ENCODE measurements at regions of chr19 and their contacts with region 1.

Region 1: GRCh38 chr19:38849860-38850435 is at the start of gene HNRNPL:
- DNase-seq: peak; percentile 99
- ATAC-seq: peak; percentile 71
- H3K4me3 Mint-ChIP-seq: peak within 1 kb of the TSS; percentile 97
- H3K27ac Mint-ChIP-seq: peak within 1 kb of the TSS; percentile 99
- H3K4me1 Mint-ChIP-seq: peaks cover 42% of the 10 kb centered on the region
- H3K27me3 Mint-ChIP-seq: no peaks in the 10 kb centered on the region
- total RNA-seq, gene HNRNPL: 714 to 722 TPM

Region 2: DNA sequence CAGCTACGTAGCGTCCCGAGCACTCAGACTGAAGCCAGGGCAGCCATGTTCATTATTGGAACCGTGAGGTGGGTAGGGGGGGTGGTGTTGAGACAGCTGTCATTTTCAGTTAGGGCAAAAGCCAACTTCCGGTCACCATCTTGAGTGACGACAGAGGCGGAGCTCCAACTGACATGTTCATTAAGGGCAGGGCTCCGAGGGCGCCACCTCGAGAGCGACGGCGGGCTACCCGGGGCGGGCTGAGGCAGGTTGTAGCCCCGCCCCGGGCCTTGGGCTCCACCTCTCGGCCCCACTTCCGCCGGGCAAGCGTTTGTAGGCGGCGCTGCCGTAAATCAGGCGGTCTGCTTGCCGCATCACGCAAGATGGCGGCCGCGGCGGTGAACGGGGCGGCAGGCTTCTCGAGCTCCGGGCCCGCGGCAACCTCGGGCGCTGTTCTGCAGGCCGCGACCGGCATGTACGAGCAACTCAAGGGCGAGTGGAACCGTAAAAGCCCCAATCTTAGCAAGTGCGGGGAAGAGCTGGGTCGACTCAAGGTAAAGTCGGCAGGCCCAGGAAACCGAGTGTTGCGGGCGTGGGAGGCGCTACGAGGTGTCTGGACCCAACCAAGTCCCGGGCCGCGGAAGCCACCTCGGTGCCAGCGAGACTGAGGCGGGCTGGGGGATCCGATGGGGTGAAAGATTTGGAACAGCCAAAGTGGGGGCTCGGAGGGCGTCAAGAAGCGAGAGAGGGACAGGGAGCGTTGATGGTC is 475.3 kb before region 1 on chr19 and contains the start of gene PSMD8:
- CTCF ChIA-PET with region 1: no interaction called
- POLR2A ChIA-PET with region 1: no interaction called
- intact Hi-C with region 1: loop called in 1 of 2 experiments (anchors 1 kb)
- DNase-seq: peak; percentile 99
- ATAC-seq: peak; percentile 99
- H3K4me3 Mint-ChIP-seq: peak within 1 kb of the TSS; percentile 97
- H3K27ac Mint-ChIP-seq: peak within 1 kb of the TSS; percentile 98
- H3K4me1 Mint-ChIP-seq: peaks cover 26% of the 10 kb centered on the region
- H3K27me3 Mint-ChIP-seq: peaks cover 5% of the 10 kb centered on the region
- total RNA-seq, gene PSMD8: 219 to 275 TPM

Region 3: GRCh38 chr19:38618590-38619360 is 231.2 kb before region 1 on chr19 and contains the start of gene EIF3K:
- CTCF ChIA-PET with region 1: interaction called, 6 read pairs
- POLR2A ChIA-PET with region 1: interaction called, 5 read pairs
- intact Hi-C with region 1: loop called (anchors 1 kb)
- DNase-seq: peak; percentile 99
- ATAC-seq: peak; percentile 74
- H3K4me3 Mint-ChIP-seq: peak within 1 kb of the TSS; percentile 100
- H3K27ac Mint-ChIP-seq: peak within 1 kb of the TSS; percentile 99
- H3K4me1 Mint-ChIP-seq: peaks cover 44% of the 10 kb centered on the region
- H3K27me3 Mint-ChIP-seq: no peaks in the 10 kb centered on the region
- total RNA-seq, gene EIF3K: 269 to 297 TPM

Region 4: DNA sequence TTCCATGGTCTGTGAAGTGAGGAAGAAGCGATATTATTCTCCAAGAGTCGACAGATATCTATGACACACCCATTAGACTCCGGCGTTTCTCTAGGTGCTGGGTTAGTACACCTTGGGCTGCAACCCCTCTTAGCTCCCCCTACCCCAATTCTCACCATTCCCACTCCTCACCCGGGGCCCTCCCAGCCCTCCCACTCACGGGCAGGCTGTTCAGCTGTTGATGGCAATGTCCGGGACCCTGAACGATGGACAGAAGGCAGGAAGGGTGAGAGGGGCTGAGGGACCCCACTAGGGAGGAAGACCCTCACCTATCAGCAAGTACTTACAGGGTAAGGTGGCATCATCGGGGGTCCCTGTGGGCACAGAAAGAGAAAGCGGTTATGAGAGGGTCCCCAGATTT is 46.4 kb before region 1 on chr19:
- CTCF ChIA-PET with region 1: no interaction called
- POLR2A ChIA-PET with region 1: no interaction called
- intact Hi-C with region 1: no loop called
- DNase-seq: no peak
- ATAC-seq: no peak
- H3K4me3 Mint-ChIP-seq: no peak overlapping the region
- H3K27ac Mint-ChIP-seq: no peak overlapping the region
- H3K4me1 Mint-ChIP-seq: peaks cover 8% of the 10 kb centered on the region
- H3K27me3 Mint-ChIP-seq: no peaks in the 10 kb centered on the region

Region 5: GRCh38 chr19:38838573-38839269 is 11.2 kb before region 1 on chr19:
- CTCF ChIA-PET with region 1: interaction called, 4 read pairs
- POLR2A ChIA-PET with region 1: interaction called, 11 read pairs
- intact Hi-C with region 1: no loop called
- DNase-seq: peak; percentile 89
- ATAC-seq: peak; percentile 83
- H3K4me3 Mint-ChIP-seq: peak overlapping the region; percentile 9
- H3K27ac Mint-ChIP-seq: peak overlapping the region; percentile 86
- H3K4me1 Mint-ChIP-seq: peaks cover 58% of the 10 kb centered on the region
- H3K27me3 Mint-ChIP-seq: no peaks in the 10 kb centered on the region

Region 6: GRCh38 chr19:38899447-38900219 is 49.7 kb after region 1 on chr19 and contains the starts of genes NFKBIB and SIRT2:
- CTCF ChIA-PET with region 1: no interaction called
- POLR2A ChIA-PET with region 1: interaction called, 6 read pairs
- intact Hi-C with region 1: loop called (anchors 1 kb)
- DNase-seq: peak; percentile 100
- ATAC-seq: peak; percentile 93
- H3K4me3 Mint-ChIP-seq: peak within 1 kb of the TSS; percentile 88
- H3K27ac Mint-ChIP-seq: peak within 1 kb of the TSS; percentile 91
- H3K4me1 Mint-ChIP-seq: peaks cover 40% of the 10 kb centered on the region
- H3K27me3 Mint-ChIP-seq: no peaks in the 10 kb centered on the region
- total RNA-seq, gene NFKBIB: 49.4 to 52.5 TPM
- total RNA-seq, gene SIRT2: 17.8 to 23.1 TPM

Region 7: DNA sequence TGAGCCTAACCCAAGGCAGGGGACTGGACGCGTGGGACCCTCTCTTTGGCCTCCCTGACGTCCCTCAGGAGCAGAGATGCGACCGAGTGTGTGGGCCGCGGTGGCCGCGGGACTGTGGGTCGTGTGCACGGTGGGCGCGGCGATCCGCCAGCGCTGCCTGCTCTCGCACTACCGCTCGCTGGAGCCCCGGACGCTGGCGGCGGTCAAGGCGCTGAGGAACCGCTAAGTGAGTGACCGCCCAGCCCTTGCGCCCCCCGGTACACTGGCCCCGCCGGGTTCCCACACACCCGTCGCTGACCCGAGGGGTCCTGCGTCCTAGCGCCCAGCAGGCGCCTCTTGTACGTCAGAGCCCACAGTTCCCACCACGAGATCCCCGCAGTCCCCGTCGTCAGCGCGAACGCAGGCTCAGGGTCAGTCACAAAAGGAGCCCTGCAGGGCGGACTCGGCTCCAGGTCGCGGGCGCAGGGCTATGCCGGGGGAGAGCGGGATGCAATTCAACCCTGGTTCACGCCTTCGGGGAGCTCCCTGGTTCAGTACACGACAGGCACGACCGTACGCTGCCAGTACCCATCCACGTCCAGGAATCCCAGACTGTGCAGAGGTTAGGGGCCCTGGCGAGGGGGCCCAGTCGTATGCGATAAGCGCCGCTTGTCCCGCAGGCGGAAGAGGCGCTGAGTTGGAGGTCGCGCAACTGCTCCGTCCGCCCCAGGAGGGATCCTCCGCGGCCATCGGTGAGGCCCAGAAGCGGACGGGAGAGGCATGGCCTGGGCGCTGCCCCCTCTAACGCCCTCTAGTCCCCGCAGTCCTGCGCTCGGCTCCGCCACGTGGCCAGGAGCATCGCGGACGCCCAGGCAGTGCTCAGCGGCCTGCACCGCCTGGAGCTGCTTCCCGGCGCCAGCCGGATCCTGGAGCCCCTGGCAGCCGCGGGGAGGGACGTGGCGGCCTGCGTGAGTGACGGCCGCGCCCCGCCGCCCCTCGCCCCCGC is 414.6 kb after region 1 on chr19:
- CTCF ChIA-PET with region 1: no interaction called
- POLR2A ChIA-PET with region 1: no interaction called
- intact Hi-C with region 1: no loop called
- DNase-seq: peak; percentile 8
- ATAC-seq: peak; percentile 42
- H3K4me3 Mint-ChIP-seq: no peak overlapping the region
- H3K27ac Mint-ChIP-seq: no peak overlapping the region
- H3K4me1 Mint-ChIP-seq: peaks cover 2% of the 10 kb centered on the region
- H3K27me3 Mint-ChIP-seq: peaks cover 36% of the 10 kb centered on the region

Region 8: GRCh38 chr19:39412100-39412866 is 562.3 kb after region 1 on chr19 and contains the start of gene PLEKHG2:
- CTCF ChIA-PET with region 1: no interaction called
- POLR2A ChIA-PET with region 1: no interaction called
- intact Hi-C with region 1: loop called in 1 of 2 experiments (anchors 1 kb)
- DNase-seq: peak; percentile 98
- ATAC-seq: peak; percentile 73
- H3K4me3 Mint-ChIP-seq: peak within 1 kb of the TSS; percentile 73
- H3K27ac Mint-ChIP-seq: peak within 1 kb of the TSS; percentile 92
- H3K4me1 Mint-ChIP-seq: peaks cover 32% of the 10 kb centered on the region
- H3K27me3 Mint-ChIP-seq: no peaks in the 10 kb centered on the region
- total RNA-seq, gene PLEKHG2: 46.0 to 65.5 TPM

Measured in activated CD4-positive, alpha-beta T cell treated with anti-CD3 and anti-CD28 coated beads for 36 hours (primary cell).